Common myeloid progenitor, CD34-positive (primary cell): ENCODE measurements at regions of chr12 and their contacts with region 1.

Region 1: DNA sequence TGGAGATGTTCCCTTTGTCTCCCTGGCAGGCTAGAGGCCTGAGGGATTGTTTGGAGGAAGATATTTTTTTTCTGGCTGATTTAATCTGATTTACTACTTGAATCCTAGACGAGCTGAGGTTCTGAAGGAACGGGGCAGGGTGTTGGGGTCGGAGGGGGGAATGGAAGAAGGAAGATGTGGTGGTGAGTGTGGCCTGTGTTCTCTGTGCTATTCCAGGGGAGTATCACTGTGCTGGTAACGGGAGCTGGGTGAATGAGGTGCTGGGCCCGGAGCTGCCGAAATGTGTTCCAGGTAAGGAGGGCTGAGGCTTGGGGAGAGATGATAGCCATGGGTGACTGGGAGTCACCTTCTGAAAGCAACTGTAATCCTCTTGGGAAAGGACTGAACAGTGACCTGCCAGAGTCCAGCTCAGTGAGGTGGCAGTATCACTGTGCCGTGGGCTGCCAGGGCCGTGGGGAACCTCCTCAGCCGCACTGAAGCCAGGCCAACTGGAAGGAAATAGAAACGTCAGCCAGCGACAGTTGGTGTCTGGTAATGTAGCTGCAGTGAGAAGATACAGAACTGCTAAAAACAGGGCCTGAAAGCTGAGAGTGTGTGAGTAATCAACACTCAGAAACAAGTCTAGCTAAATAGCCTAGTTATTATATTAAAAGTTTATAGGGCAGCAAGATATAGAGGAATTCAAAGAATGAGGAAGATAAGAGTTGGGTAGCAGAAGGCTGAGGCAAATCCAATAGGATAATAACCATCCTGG is 7.9 kb downstream of the C1S start:
- DNase-seq: peak; percentile 80 to 96 (median 93)
- H3K4me3 ChIP-seq: peak overlapping the region in 2 of 7 experiments; percentile 1 to 25
- H3K27ac ChIP-seq: peak overlapping the region; percentile 76 to 85
- H3K4me1 ChIP-seq: peaks cover 2 to 26% (median 20%) of the 10 kb centered on the region in 4 experiments
- H3K27me3 ChIP-seq: no peaks in the 10 kb centered on the region

Region 2: GRCh38 chr12:7092229-7092985 is 24.0 kb after region 1 on chr12 and contains the start of gene C1R:
- CTCF ChIA-PET with region 1: interaction called, 15 read pairs
- POLR2A ChIA-PET with region 1: no interaction called
- DNase-seq: peak; percentile 61 to 78 (median 68)
- H3K4me3 ChIP-seq: peak within 1 kb of the TSS; percentile 19 to 89 (median 65)
- H3K27ac ChIP-seq: no peak within 1 kb of the TSS
- H3K4me1 ChIP-seq: peaks cover 0 to 12% (median 5%) of the 10 kb centered on the region in 4 experiments
- H3K27me3 ChIP-seq: no peaks in the 10 kb centered on the region